AG04450 (cell line): ENCODE measurements at regions of chr12 and their contacts with region 1.

Region 1: GRCh38 chr12:8544295-8544694 is 3.6 kb upstream of the CLEC4E start:
- DNase-seq: peak; percentile 26
- H3K4me3 ChIP-seq: no peak overlapping the region
- H3K27ac ChIP-seq: no peak overlapping the region
- H3K27me3 ChIP-seq: no peaks in the 10 kb centered on the region
- CTCF ChIP-seq: peak; percentile 94

Region 2: DNA sequence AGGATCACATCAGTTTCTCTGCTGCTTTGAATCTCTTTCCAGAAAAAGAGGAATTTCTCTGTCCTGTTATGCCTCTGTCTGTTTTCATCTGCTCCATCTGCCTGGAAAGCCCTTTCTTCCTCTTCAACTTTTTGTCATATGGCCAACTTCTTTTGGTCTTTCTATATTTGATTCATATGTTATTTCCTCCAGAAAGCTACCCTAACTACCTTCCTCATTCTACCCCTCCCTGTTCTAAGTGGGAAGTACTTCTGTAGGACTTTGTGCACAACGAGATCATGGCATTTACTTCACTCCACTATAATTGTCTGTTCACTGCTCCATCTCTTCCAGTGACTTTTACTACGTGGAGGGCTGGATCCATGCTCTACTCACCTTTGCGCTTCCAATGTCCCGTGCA is 25.1 kb before region 1 on chr12:
- CTCF ChIA-PET with region 1: interaction called, 10 read pairs
- POLR2A ChIA-PET with region 1: no interaction called
- DNase-seq: no peak
- H3K4me3 ChIP-seq: no peak overlapping the region
- H3K27ac ChIP-seq: no peak overlapping the region
- H3K27me3 ChIP-seq: no peaks in the 10 kb centered on the region
- CTCF ChIP-seq: no peak

Region 3: DNA sequence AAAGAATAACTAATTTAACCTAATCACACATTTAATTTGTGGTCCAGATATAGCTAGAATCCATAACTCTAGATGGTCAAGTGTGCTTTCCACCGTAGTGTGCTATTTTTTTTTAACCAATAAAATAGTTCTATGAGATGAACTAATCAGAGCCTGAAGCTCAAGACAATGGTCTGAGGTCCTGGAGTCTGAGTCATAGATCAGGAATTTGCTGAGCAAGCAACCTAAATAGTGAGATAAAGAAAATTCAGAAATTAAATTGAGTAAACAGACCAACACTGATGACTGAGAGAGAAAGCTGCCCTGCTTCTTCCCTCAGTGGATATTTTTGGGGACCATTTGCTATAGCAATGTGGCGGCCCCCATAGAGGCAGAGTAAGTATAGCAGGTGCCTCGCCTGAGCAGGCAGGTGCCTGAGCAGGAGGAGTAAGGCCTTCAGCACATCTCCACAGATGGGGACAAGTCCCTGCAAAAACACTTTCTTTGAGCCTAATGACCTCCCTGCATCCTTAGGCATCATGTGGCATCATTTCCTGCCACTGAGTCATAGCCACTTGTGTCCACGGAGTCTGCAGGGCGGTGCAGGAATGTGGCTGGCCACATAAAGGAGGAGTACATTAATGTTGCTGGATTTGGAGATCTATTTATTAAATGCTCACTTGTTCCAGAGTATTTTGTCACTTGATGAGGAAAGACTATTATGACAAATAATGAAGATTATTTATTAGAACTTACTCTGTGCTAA is 10.3 kb after region 1 on chr12:
- CTCF ChIA-PET with region 1: interaction called, 24 read pairs
- POLR2A ChIA-PET with region 1: no interaction called
- DNase-seq: no peak
- H3K4me3 ChIP-seq: no peak overlapping the region
- H3K27ac ChIP-seq: no peak overlapping the region
- H3K27me3 ChIP-seq: no peaks in the 10 kb centered on the region
- CTCF ChIP-seq: no peak

Region 4: DNA sequence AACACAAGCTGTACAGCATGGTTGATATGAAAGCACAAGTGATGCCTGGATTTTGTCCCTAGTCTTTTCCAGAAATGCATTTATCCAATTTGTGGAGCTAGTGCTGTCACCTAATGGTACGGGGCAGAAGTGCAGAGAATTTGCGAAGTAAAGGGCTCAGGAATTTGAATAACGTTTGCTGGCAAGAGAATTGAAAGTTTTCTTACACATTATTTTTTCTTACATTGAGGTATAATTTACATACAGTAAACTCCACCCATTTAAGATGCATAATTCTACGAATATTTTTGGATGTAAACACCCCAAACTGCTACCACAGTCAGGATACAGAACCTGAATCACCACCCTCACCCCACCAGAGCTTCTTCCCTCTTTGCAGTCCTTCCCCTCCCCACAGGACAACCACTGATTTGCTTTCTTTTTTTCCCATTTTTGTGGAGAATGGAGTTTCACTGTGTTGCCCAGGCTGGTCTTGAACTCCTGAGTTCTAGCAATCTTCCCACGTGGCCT is 64.8 kb after region 1 on chr12:
- CTCF ChIA-PET with region 1: interaction called, 46 read pairs
- POLR2A ChIA-PET with region 1: no interaction called
- DNase-seq: peak; percentile 11
- H3K4me3 ChIP-seq: peak overlapping the region; percentile 5; the same call in 1 of the 2 replicates
- H3K27ac ChIP-seq: no peak overlapping the region
- H3K27me3 ChIP-seq: no peaks in the 10 kb centered on the region
- CTCF ChIP-seq: peak; percentile 66

Region 5: DNA sequence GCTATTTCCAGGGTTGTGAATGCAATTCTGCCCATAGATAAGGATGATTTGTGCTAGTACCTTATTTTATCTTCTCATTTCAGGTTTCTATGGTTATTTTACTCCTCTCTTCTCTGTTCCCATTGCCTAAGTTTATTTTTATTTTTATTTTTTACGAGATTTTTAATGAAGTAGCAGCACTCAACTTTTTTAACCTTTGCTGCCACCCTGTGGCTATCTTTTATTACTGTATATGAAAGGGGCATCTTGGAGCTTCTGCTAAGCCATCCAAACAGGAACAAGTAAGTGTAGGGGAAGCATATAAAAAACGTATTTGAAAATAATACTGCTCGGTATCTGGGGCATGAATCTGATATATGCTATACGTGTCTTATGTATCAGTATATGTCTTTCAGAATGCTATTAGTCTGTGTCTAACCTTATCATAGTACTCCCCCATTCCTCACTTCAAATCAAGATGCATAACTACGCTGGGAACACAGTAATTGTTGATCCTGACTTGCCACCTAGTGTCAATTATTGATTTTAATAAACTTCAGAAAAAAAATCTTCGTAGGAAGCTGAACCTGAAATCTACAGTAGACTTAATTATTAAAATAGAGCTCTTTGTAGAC is 505.3 kb after region 1 on chr12:
- CTCF ChIA-PET with region 1: interaction called, 52 read pairs
- POLR2A ChIA-PET with region 1: no interaction called
- DNase-seq: peak; percentile 11
- H3K4me3 ChIP-seq: no peak overlapping the region
- H3K27ac ChIP-seq: no peak overlapping the region
- H3K27me3 ChIP-seq: no peaks in the 10 kb centered on the region
- CTCF ChIP-seq: peak; percentile 54